Ovary (tissue), 10 donors: ENCODE measurements at regions of chr12 and their contacts with region 1.

Region 1: DNA sequence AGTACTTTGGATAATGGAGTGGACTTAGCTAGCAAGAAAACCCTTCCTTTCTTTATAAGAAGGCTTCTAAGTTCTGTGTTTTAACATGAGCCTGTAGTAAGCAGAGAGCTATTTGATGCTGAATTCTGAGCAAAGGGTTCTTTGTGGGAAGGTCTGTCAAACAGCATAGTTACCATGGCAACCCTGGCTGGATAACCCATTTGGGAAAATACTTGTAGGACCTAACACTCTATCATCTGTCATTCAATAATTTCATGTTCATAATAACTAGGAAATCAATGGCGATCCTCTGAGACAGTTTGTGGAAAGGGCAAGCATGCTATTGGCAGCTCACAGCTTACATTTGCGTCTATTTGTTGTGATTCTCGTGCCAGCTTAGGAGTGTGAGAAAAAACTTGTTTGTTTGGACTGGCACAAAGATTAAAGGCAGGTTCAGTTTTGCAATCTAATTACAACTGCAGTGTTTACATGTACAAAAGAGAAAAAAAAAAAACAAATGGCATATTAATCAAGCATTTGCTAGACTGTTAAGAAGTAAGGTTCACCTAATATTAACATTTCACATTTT is 219.2 kb downstream of the PDZRN4 start:
- DNase-seq: no peak
- H3K4me3 ChIP-seq: no peak overlapping the region
- H3K27ac ChIP-seq: no peak overlapping the region
- H3K4me1 ChIP-seq: no peaks in the 10 kb centered on the region
- H3K27me3 ChIP-seq: no peaks in the 10 kb centered on the region
- CTCF ChIP-seq: no peak
- EP300 ChIP-seq: no peak
- POLR2A ChIP-seq: no peak

Region 2: DNA sequence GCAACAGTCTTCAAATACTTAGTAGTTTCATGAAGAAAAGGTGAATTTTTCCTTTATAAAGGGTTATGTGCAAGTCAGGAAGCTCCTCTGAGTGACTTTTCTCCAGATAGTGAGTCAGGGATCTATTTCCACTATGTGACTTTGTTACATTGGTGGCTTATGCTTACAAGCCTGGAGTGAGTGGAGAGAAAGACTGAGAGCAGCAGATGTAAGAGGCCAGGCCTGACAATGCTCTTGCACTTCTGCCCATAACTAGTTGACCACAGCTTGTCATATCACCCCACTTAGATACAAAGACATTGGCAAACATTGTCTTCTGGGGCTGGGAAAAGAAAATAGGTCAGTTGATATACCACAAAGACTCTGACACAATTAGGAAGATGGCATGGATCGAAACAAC is 17.3 kb after region 1 on chr12:
- intact Hi-C with region 1: loop called in 1 of 4 experiments (anchors 1 kb)
- DNase-seq: no peak
- H3K4me3 ChIP-seq: no peak overlapping the region
- H3K27ac ChIP-seq: no peak overlapping the region
- H3K4me1 ChIP-seq: no peaks in the 10 kb centered on the region
- H3K27me3 ChIP-seq: no peaks in the 10 kb centered on the region
- CTCF ChIP-seq: no peak
- EP300 ChIP-seq: no peak
- POLR2A ChIP-seq: no peak